GM23248 (cell line): ENCODE measurements at regions of chr17 and their contacts with region 1.

Region 1: GRCh38 chr17:57855391-57856035 is 5.7 kb upstream of the MRPS23 start:
- DNase-seq: no peak
- H3K4me3 ChIP-seq: no peak overlapping the region
- H3K27ac ChIP-seq: no peak overlapping the region
- H3K4me1 ChIP-seq: peaks cover 8% of the 10 kb centered on the region; the same call in 1 of the 2 replicates
- H3K27me3 ChIP-seq: no peaks in the 10 kb centered on the region

Region 2: GRCh38 chr17:58100506-58100905 is 245.0 kb after region 1 on chr17:
- in situ Hi-C with region 1: loop called (anchors 5 kb)
- DNase-seq: no peak
- H3K4me3 ChIP-seq: no peak overlapping the region
- H3K27ac ChIP-seq: no peak overlapping the region
- H3K4me1 ChIP-seq: no peaks in the 10 kb centered on the region
- H3K27me3 ChIP-seq: no peaks in the 10 kb centered on the region